ENCODE measurements at regions of chr4 and their contacts with region 1.

Region 1: GRCh38 chr4:75514131-75514948 is at the starts of genes RCHY1 and THAP6:
- DNase-seq: peak; percentile 95
- ATAC-seq: peak; percentile 93
- H3K4me3 Mint-ChIP-seq: no peak within 1 kb of the TSS
- H3K27ac Mint-ChIP-seq: peak within 1 kb of the TSS; percentile 95
- H3K4me1 Mint-ChIP-seq: peaks cover 39% of the 10 kb centered on the region
- H3K27me3 Mint-ChIP-seq: no peaks in the 10 kb centered on the region
- total RNA-seq, gene RCHY1: 32.9 to 33.7 TPM
- total RNA-seq, gene THAP6: 18.4 TPM

Region 2: GRCh38 chr4:74157561-74158465 is 1356.5 kb before region 1 on chr4 and contains the start of gene MTHFD2L:
- CTCF ChIA-PET with region 1: no interaction called
- POLR2A ChIA-PET with region 1: no interaction called
- intact Hi-C with region 1: loop called in 1 of 2 experiments (anchors 2 kb)
- DNase-seq: peak; percentile 92
- ATAC-seq: peak; percentile 99
- H3K4me3 Mint-ChIP-seq: peak within 1 kb of the TSS; percentile 91
- H3K27ac Mint-ChIP-seq: peak within 1 kb of the TSS; percentile 93
- H3K4me1 Mint-ChIP-seq: peaks cover 19% of the 10 kb centered on the region
- H3K27me3 Mint-ChIP-seq: peaks cover 3% of the 10 kb centered on the region
- total RNA-seq, gene MTHFD2L: 6.4 to 6.9 TPM

Region 3: GRCh38 chr4:75398501-75398900 is 115.8 kb before region 1 on chr4:
- CTCF ChIA-PET with region 1: no interaction called
- POLR2A ChIA-PET with region 1: no interaction called
- intact Hi-C with region 1: no loop called
- DNase-seq: no peak
- ATAC-seq: no peak
- H3K4me3 Mint-ChIP-seq: no peak overlapping the region
- H3K27ac Mint-ChIP-seq: no peak overlapping the region
- H3K4me1 Mint-ChIP-seq: no peaks in the 10 kb centered on the region
- H3K27me3 Mint-ChIP-seq: peaks cover 2% of the 10 kb centered on the region

Region 4: GRCh38 chr4:75454508-75454907 is 59.8 kb before region 1 on chr4:
- CTCF ChIA-PET with region 1: no interaction called
- POLR2A ChIA-PET with region 1: no interaction called
- intact Hi-C with region 1: no loop called
- DNase-seq: no peak
- ATAC-seq: no peak
- H3K4me3 Mint-ChIP-seq: no peak overlapping the region
- H3K27ac Mint-ChIP-seq: no peak overlapping the region
- H3K4me1 Mint-ChIP-seq: no peaks in the 10 kb centered on the region
- H3K27me3 Mint-ChIP-seq: peaks cover 9% of the 10 kb centered on the region

Region 5: DNA sequence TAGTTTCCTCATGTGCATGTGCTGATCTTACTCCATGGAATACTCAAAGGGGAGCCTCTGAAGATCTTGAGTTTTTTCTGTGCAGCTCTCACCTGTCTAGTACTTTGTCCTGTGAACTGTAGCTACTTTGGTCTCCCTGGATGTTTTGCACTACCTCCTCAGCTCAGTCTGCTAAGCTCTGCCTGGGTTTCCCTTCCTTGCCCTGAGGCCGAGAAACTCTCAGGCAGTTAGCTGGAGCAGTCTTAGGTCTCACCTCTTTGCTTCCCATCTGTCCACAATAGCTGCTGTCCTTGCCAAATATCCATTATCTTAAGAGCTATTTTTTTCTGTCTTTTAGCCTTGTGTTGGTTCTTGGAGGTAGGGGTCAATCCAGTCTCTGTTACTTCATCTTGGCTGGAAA is 11.6 kb after region 1 on chr4:
- CTCF ChIA-PET with region 1: interaction called, 17 read pairs
- POLR2A ChIA-PET with region 1: no interaction called
- intact Hi-C with region 1: no loop called
- DNase-seq: no peak
- ATAC-seq: no peak
- H3K4me3 Mint-ChIP-seq: no peak overlapping the region
- H3K27ac Mint-ChIP-seq: no peak overlapping the region
- H3K4me1 Mint-ChIP-seq: peaks cover 15% of the 10 kb centered on the region
- H3K27me3 Mint-ChIP-seq: no peaks in the 10 kb centered on the region

Region 6: GRCh38 chr4:75630174-75630936 is 116.0 kb after region 1 on chr4 and contains the start of gene CDKL2:
- CTCF ChIA-PET with region 1: no interaction called
- POLR2A ChIA-PET with region 1: no interaction called
- intact Hi-C with region 1: loop called in 1 of 2 experiments (anchors 1 kb)
- DNase-seq: peak; percentile 94
- ATAC-seq: peak; percentile 99
- H3K4me3 Mint-ChIP-seq: peak within 1 kb of the TSS; percentile 76
- H3K27ac Mint-ChIP-seq: peak within 1 kb of the TSS; percentile 27
- H3K4me1 Mint-ChIP-seq: peaks cover 8% of the 10 kb centered on the region
- H3K27me3 Mint-ChIP-seq: no peaks in the 10 kb centered on the region
- total RNA-seq, gene CDKL2: 0.62 to 0.91 TPM

Region 7: GRCh38 chr4:75940692-75941253 is 426.4 kb after region 1 on chr4 and contains the start of gene NAAA:
- CTCF ChIA-PET with region 1: no interaction called
- POLR2A ChIA-PET with region 1: no interaction called
- intact Hi-C with region 1: loop called in 1 of 2 experiments (anchors 1 kb)
- DNase-seq: peak; percentile 87
- ATAC-seq: peak; percentile 85
- H3K4me3 Mint-ChIP-seq: peak within 1 kb of the TSS; percentile 97
- H3K27ac Mint-ChIP-seq: peak within 1 kb of the TSS; percentile 97
- H3K4me1 Mint-ChIP-seq: peaks cover 7% of the 10 kb centered on the region
- H3K27me3 Mint-ChIP-seq: no peaks in the 10 kb centered on the region
- total RNA-seq, gene NAAA: 21.2 to 26.8 TPM

Region 8: GRCh38 chr4:76148142-76148865 is 634.0 kb after region 1 on chr4 and contains the start of gene NUP54:
- CTCF ChIA-PET with region 1: no interaction called
- POLR2A ChIA-PET with region 1: no interaction called
- intact Hi-C with region 1: loop called (anchors 1 to 2 kb)
- DNase-seq: peak; percentile 97
- ATAC-seq: peak; percentile 97
- H3K4me3 Mint-ChIP-seq: peak within 1 kb of the TSS; percentile 86
- H3K27ac Mint-ChIP-seq: peak within 1 kb of the TSS; percentile 89
- H3K4me1 Mint-ChIP-seq: peaks cover 25% of the 10 kb centered on the region
- H3K27me3 Mint-ChIP-seq: no peaks in the 10 kb centered on the region
- total RNA-seq, gene NUP54: 58.2 to 67.3 TPM

Measured in activated CD4-positive, alpha-beta T cell treated with anti-CD3 and anti-CD28 coated beads for 36 hours (primary cell).